ENCODE measurements at regions of chr11 and their contacts with region 1.

Region 1: DNA sequence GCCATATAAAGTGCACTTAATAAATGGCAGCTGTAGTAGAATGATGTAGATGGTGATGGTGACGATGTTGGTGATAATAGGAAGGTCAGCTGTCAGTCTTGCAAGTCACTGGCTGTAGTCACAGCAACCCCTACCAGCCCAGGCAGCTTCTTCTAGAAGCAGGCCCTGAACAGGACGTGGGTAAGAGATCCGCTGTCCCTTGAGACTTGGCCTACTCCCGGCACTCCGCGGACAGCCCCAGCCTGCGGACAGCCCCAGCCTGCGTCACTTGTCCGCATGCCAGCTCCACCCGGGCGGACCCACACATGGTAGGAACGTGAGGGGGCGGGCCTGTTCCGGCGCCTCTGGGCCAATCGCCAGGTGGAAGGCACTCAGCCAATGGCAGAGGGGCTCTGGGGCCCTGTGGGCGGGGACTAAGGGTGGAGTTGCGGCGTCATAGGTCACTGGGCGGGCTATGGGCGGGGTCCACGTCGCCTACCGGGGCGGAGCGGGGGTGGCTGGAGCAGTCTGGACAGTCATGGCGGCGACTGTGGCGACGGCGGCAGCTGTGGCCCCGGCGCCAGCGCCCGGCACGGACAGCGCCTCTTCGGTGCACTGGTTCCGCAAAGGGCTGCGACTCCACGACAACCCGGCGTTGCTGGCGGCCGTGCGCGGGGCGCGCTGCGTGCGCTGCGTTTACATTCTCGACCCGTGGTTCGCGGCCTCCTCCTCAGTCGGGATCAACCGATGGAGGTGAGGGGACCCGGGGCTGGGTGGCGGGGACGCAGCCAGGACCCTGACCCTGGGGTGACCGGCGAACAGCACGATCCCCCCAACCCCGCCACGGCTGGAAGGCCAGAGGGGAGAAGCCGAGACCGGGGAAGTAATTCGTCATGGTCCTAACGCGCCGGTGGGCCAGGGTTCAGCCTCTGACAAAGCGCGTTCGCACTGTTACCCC is at the start of gene CRY2:
- DNase-seq: peak; percentile 100
- H3K4me3 ChIP-seq: peak within 1 kb of the TSS; percentile 74
- H3K27ac ChIP-seq: peak within 1 kb of the TSS; percentile 87
- H3K4me1 ChIP-seq: peaks cover 25% of the 10 kb centered on the region
- H3K27me3 ChIP-seq: peaks cover 12% of the 10 kb centered on the region
- CTCF ChIP-seq: no peak
- total RNA-seq, gene CRY2: 46.4 and 47.0 TPM in 2 replicates

Region 2: DNA sequence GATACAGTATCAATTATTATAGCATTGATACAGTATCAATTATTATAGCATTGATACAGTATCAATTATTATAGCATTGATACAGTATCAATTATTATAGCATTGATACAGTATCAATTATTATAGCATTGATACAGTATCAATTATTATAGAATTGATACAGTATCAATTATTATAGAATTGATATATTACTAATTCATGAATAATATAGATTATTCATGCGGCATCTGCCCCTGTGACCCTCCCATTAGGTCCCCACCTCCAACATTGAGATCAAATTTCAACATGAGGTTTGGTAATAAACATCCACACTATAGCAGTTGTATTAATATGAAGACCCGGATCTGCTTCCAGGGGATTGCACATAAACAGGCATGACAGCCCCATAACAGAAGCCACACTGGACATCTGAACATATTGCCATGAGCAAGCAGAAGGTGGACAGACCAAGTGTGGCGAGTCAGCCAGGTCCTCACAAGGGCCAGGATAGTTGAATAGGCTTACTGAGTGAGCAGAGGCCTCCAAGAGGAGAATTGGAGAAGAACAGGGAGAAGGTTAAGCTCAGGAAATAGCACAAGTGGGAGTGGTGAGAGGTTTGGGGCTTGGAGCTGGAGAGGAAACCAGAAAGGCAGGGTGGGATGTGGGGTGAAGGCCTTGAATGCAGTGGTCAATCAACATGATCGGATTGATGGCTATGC is 31.6 kb before region 1 on chr11:
- CTCF ChIA-PET with region 1: no interaction called
- POLR2A ChIA-PET with region 1: no interaction called
- intact Hi-C with region 1: no loop called
- DNase-seq: peak; percentile 66
- H3K4me3 ChIP-seq: no peak overlapping the region
- H3K27ac ChIP-seq: no peak overlapping the region
- H3K4me1 ChIP-seq: peaks cover 5% of the 10 kb centered on the region
- H3K27me3 ChIP-seq: no peaks in the 10 kb centered on the region
- CTCF ChIP-seq: no peak

Region 3: DNA sequence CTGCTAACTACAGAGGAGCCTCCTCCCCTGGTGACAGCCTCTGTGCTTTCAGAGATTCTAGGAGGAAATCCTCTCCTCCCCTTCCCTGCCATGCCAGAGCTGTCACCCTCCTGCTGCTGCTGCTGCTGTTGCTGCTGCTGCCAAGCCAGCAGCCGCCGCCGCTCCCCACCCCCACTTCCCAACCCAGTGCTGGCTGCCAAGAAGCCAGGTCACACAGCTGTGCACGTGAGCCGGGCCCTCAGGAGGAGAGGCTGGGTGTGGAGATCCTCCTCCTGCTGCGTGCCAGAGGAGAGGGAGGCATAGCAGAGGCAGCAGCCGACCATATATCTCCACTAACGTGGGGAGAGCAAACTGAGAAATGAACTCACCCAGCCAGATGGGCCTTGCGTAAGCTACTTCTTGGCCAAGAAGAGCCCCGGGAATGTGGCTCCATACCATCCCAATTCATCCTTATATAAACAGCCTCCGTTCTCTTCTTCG is 12.5 kb after region 1 on chr11:
- CTCF ChIA-PET with region 1: interaction called, 5 read pairs
- POLR2A ChIA-PET with region 1: interaction called, 12 read pairs
- intact Hi-C with region 1: no loop called
- DNase-seq: peak; percentile 97
- H3K4me3 ChIP-seq: no peak overlapping the region
- H3K27ac ChIP-seq: peak overlapping the region; percentile 70
- H3K4me1 ChIP-seq: peaks cover 37% of the 10 kb centered on the region
- H3K27me3 ChIP-seq: no peaks in the 10 kb centered on the region
- CTCF ChIP-seq: no peak

Region 4: GRCh38 chr11:45917623-45918330 is 70.5 kb after region 1 on chr11 and contains the start of gene PEX16:
- CTCF ChIA-PET with region 1: no interaction called
- POLR2A ChIA-PET with region 1: no interaction called
- intact Hi-C with region 1: loop called (anchors 5 kb)
- DNase-seq: peak; percentile 100
- H3K4me3 ChIP-seq: peak within 1 kb of the TSS; percentile 71
- H3K27ac ChIP-seq: peak within 1 kb of the TSS; percentile 87
- H3K4me1 ChIP-seq: peaks cover 9% of the 10 kb centered on the region
- H3K27me3 ChIP-seq: no peaks in the 10 kb centered on the region
- CTCF ChIP-seq: no peak
- total RNA-seq, gene PEX16: 64.1 and 68.9 TPM in 2 replicates

Region 5: DNA sequence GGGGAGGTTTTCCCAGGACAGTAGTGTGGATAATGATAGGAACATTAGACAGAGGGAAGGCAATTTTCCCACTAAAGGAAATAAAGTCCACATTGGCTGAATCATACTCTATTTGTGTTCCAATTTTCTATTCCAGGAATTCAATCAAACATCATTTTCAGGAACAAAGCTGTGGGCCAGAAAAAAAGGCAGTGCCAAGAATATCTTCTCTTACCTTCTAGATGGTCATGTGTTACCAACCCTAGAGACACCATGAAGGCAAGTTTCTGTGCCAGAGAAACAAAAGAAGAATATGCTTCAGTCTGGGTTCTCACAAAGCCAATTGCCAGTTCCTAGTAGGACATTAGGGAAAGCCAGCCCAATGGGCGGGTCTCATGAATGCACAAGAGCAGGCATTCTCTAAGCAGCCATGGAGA is 102.8 kb after region 1 on chr11:
- CTCF ChIA-PET with region 1: no interaction called
- POLR2A ChIA-PET with region 1: no interaction called
- intact Hi-C with region 1: no loop called
- DNase-seq: no peak
- H3K4me3 ChIP-seq: no peak overlapping the region
- H3K27ac ChIP-seq: no peak overlapping the region
- H3K4me1 ChIP-seq: no peaks in the 10 kb centered on the region
- H3K27me3 ChIP-seq: no peaks in the 10 kb centered on the region
- CTCF ChIP-seq: no peak

Region 6: GRCh38 chr11:46006418-46007070 is 159.3 kb after region 1 on chr11:
- CTCF ChIA-PET with region 1: interaction called, 13 read pairs
- POLR2A ChIA-PET with region 1: no interaction called
- intact Hi-C with region 1: loop called (anchors 1 kb)
- DNase-seq: peak; percentile 95
- H3K4me3 ChIP-seq: no peak overlapping the region
- H3K27ac ChIP-seq: no peak overlapping the region
- H3K4me1 ChIP-seq: peaks cover 28% of the 10 kb centered on the region
- H3K27me3 ChIP-seq: no peaks in the 10 kb centered on the region
- CTCF ChIP-seq: peak; percentile 100

Region 7: GRCh38 chr11:46099963-46100316 is 252.7 kb after region 1 on chr11:
- CTCF ChIA-PET with region 1: no interaction called
- POLR2A ChIA-PET with region 1: no interaction called
- intact Hi-C with region 1: no loop called
- DNase-seq: no peak
- H3K4me3 ChIP-seq: peak overlapping the region; percentile 5
- H3K27ac ChIP-seq: peak overlapping the region; percentile 74
- H3K4me1 ChIP-seq: peaks cover 45% of the 10 kb centered on the region
- H3K27me3 ChIP-seq: no peaks in the 10 kb centered on the region
- CTCF ChIP-seq: no peak

Region 8: GRCh38 chr11:47051217-47051616 is 1204.0 kb after region 1 on chr11:
- CTCF ChIA-PET with region 1: no interaction called
- POLR2A ChIA-PET with region 1: interaction called, 14 read pairs
- intact Hi-C with region 1: no loop called
- DNase-seq: no peak
- H3K4me3 ChIP-seq: no peak overlapping the region
- H3K27ac ChIP-seq: no peak overlapping the region
- H3K4me1 ChIP-seq: peaks cover 9% of the 10 kb centered on the region
- H3K27me3 ChIP-seq: no peaks in the 10 kb centered on the region
- CTCF ChIP-seq: no peak

Measured in A673 (cell line).